ENCODE measurements at regions of chr2 and their contacts with region 1.

Region 1: GRCh38 chr2:218898109-218898878 is 17.6 kb downstream of the WNT10A start:
- DNase-seq: peak; percentile 74
- H3K4me3 Mint-ChIP-seq: peak overlapping the region; percentile 68
- H3K27ac Mint-ChIP-seq: peak overlapping the region; percentile 68
- H3K4me1 Mint-ChIP-seq: peaks cover 33% of the 10 kb centered on the region
- H3K27me3 Mint-ChIP-seq: peaks cover 47% of the 10 kb centered on the region

Region 2: DNA sequence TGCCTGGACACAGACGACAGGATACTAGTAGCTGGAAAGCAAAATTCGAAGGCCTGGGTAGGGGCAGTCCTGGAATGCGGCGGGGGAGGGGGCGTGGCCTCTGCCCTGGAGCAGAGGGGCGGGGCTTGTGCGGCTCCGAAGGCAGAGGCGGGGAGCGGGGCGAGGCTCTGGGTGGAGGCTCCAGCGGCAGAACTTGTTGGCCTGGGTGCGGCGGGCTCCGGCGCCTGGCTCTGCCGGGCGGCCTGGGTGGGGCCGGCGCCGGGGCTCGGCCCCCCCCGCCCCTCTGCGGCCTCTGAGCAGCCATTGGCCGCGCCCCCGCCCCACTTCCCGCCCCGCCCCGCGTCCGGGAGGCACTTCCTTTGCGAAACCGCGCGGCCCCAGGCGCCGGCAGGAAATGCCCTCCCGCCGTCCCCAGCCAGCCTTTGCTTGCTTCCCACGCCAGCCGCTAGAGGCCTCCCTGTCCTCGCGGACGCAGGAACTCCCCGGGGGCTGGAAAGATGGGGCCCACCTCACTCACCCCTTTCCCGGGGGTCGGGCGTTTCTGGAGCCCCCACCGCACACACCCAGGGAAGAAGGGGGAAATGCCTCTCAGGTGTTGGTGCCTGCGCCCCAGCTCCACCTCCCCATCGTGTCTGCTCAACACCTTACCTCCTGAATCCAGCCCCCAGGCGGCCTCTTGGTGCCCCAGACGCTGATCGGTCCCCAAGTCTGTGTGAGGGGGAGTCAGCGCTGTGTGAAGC is 491.9 kb before region 1 on chr2:
- intact Hi-C with region 1: loop called (anchors 5 kb)
- DNase-seq: peak; percentile 91
- H3K4me3 Mint-ChIP-seq: peak overlapping the region; percentile 76
- H3K27ac Mint-ChIP-seq: peak overlapping the region; percentile 81
- H3K4me1 Mint-ChIP-seq: peaks cover 36% of the 10 kb centered on the region
- H3K27me3 Mint-ChIP-seq: no peaks in the 10 kb centered on the region

Region 3: GRCh38 chr2:218710687-218711549 is 187.4 kb before region 1 on chr2 and contains the start of gene TTLL4:
- intact Hi-C with region 1: loop called (anchors 2 kb)
- DNase-seq: peak; percentile 98
- H3K4me3 Mint-ChIP-seq: peak within 1 kb of the TSS; percentile 95
- H3K27ac Mint-ChIP-seq: peak within 1 kb of the TSS; percentile 84
- H3K4me1 Mint-ChIP-seq: peaks cover 17% of the 10 kb centered on the region
- H3K27me3 Mint-ChIP-seq: peaks cover 1% of the 10 kb centered on the region
- total RNA-seq, gene TTLL4: 55.7 and 64.7 TPM in 2 replicates

Region 4: GRCh38 chr2:218876562-218877219 is 21.6 kb before region 1 on chr2:
- intact Hi-C with region 1: loop called (anchors 1 kb)
- DNase-seq: peak; percentile 56
- H3K4me3 Mint-ChIP-seq: no peak overlapping the region
- H3K27ac Mint-ChIP-seq: no peak overlapping the region
- H3K4me1 Mint-ChIP-seq: peaks cover 17% of the 10 kb centered on the region
- H3K27me3 Mint-ChIP-seq: peaks cover 68% of the 10 kb centered on the region

Region 5: GRCh38 chr2:218979846-218980734 is 81.8 kb after region 1 on chr2:
- intact Hi-C with region 1: no loop called
- DNase-seq: peak; percentile 76
- H3K4me3 Mint-ChIP-seq: no peak overlapping the region
- H3K27ac Mint-ChIP-seq: peak overlapping the region; percentile 28
- H3K4me1 Mint-ChIP-seq: peaks cover 9% of the 10 kb centered on the region
- H3K27me3 Mint-ChIP-seq: peaks cover 65% of the 10 kb centered on the region

Region 6: GRCh38 chr2:219253753-219254590 is 355.7 kb after region 1 on chr2 and contains the start of gene TUBA4A:
- intact Hi-C with region 1: loop called (anchors 2 kb)
- DNase-seq: peak; percentile 84
- H3K4me3 Mint-ChIP-seq: peak within 1 kb of the TSS; percentile 77
- H3K27ac Mint-ChIP-seq: peak within 1 kb of the TSS; percentile 92
- H3K4me1 Mint-ChIP-seq: peaks cover 46% of the 10 kb centered on the region
- H3K27me3 Mint-ChIP-seq: no peaks in the 10 kb centered on the region
- total RNA-seq, gene TUBA4A: 220 and 231 TPM in 2 replicates

Measured in activated T-helper 2 cell treated with anti-CD3 and anti-CD28 coated beads, Interferon-gamma antibody, Interleukin-2, Interleukin-4, amounts not matched to agents 10 μg/mL and 5 μg/mL and 100 μg/mL, durations not matched to agents 14 hours and 24 hours and 36 hours (primary cell).